ENCODE measurements at regions of chr11 and their contacts with region 1.

Region 1: GRCh38 chr11:1832211-1832919 is 2.4 kb upstream of the SYT8 start:
- DNase-seq: peak; percentile 71
- ATAC-seq: peak; percentile 83
- H3K4me3 Mint-ChIP-seq: no peak overlapping the region
- H3K27ac Mint-ChIP-seq: no peak overlapping the region
- H3K4me1 Mint-ChIP-seq: peaks cover 2% of the 10 kb centered on the region
- H3K27me3 Mint-ChIP-seq: peaks cover 9% of the 10 kb centered on the region

Region 2: GRCh38 chr11:1652771-1653540 is 179.4 kb before region 1 on chr11:
- CTCF ChIA-PET with region 1: interaction called, 71 read pairs
- DNase-seq: peak; percentile 76
- ATAC-seq: peak; percentile 87
- H3K4me3 Mint-ChIP-seq: no peak overlapping the region
- H3K27ac Mint-ChIP-seq: no peak overlapping the region
- H3K4me1 Mint-ChIP-seq: no peaks in the 10 kb centered on the region
- H3K27me3 Mint-ChIP-seq: peaks cover 22% of the 10 kb centered on the region

Region 3: DNA sequence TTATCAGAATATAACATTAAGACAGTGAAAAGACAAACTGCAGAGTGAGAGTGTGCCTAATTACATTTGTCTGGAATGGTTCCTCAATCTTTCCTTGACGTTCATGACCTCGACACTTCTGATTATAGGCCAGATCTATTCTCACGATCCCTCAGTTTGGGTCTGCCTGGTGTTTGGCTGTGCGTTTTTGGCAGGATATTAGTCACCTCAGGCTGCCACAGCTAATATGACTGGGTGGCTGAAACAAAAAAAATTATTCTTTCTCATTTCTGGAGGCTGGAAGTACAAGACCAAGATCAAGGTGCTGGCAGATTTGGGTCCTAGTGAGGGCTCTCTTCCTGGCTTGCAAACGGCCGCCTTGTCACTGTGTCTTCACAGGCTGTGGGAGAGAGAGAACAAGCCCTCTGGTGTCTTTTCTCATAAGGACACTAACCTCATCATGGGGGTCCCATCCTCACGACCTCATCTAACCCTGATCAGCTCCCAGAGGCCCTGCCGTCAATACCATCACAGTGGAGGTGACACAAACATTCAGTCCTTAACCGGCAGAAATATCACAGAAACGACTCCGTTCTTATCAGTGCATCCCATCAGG is 105.2 kb before region 1 on chr11:
- CTCF ChIA-PET with region 1: interaction called, 15 read pairs
- DNase-seq: peak; percentile 54
- ATAC-seq: peak; percentile 53
- H3K4me3 Mint-ChIP-seq: no peak overlapping the region
- H3K27ac Mint-ChIP-seq: peak overlapping the region; percentile 37
- H3K4me1 Mint-ChIP-seq: peaks cover 52% of the 10 kb centered on the region
- H3K27me3 Mint-ChIP-seq: peaks cover 31% of the 10 kb centered on the region

Region 4: GRCh38 chr11:1772270-1773130 is 59.9 kb before region 1 on chr11:
- CTCF ChIA-PET with region 1: interaction called, 10 read pairs
- DNase-seq: peak; percentile 84
- ATAC-seq: peak; percentile 98
- H3K4me3 Mint-ChIP-seq: peak overlapping the region; percentile 45
- H3K27ac Mint-ChIP-seq: peak overlapping the region; percentile 83
- H3K4me1 Mint-ChIP-seq: peaks cover 53% of the 10 kb centered on the region
- H3K27me3 Mint-ChIP-seq: peaks cover 3% of the 10 kb centered on the region

Region 5: DNA sequence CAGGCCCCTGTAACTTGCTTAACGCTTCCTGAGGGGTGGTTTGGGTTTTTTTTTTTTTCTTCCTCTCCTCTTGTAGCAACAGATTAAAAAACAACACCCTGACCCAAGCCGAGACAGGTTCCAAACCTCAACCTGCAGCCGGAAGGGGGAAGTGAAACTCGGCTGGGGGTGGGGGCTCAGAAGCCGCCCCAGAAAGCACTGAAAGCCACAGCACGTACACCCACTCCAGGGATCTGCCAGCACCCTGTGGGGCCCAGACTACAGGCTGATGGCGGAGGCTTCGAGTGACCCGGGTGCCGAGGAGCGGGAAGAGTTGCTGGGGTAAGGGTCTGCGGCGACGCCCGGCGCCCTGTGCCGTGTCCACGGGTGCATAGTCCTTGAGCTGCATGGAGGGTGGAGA is 20.5 kb after region 1 on chr11 and contains the start of gene LSP1:
- CTCF ChIA-PET with region 1: interaction called, 23 read pairs
- DNase-seq: peak; percentile 95
- ATAC-seq: peak; percentile 59
- H3K4me3 Mint-ChIP-seq: peak within 1 kb of the TSS; percentile 99
- H3K27ac Mint-ChIP-seq: peak within 1 kb of the TSS; percentile 99
- H3K4me1 Mint-ChIP-seq: peaks cover 55% of the 10 kb centered on the region
- H3K27me3 Mint-ChIP-seq: no peaks in the 10 kb centered on the region
- total RNA-seq, gene LSP1: 574 to 702 TPM

Region 6: DNA sequence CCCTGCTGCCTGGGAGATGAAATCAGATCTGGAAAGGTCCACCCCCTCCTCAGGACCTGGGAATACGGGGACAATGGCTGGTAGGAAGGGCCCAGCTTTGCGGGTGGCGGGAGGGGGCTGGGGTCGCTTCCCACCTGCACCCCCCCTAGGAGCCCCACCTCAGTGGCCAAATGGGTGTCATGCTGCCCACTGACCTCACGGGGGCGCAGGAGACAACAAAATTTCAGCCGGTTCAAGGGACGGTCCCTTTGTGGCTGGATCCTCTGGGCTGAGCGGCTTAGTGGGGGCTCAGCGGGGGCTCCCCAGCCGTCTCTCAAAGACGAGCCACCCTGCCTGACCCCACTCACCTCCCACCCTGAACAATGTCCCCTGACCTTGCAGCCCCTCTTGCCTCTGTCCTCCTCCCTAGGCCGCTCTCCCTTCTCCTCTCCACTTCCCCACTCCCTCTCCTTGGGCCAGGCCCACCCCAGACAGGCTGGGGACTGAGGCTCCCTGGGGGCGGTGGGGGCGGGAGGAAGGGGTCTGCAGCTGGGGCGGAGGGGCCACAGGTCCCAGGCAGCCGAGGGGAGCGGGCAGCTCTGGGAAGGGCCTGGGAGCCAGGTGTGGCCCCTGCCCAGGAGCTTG is 204.6 kb after region 1 on chr11:
- CTCF ChIA-PET with region 1: interaction called, 11 read pairs
- DNase-seq: no peak
- ATAC-seq: no peak
- H3K4me3 Mint-ChIP-seq: no peak overlapping the region
- H3K27ac Mint-ChIP-seq: no peak overlapping the region
- H3K4me1 Mint-ChIP-seq: no peaks in the 10 kb centered on the region
- H3K27me3 Mint-ChIP-seq: no peaks in the 10 kb centered on the region

Region 7: GRCh38 chr11:2109541-2110019 is 277.2 kb after region 1 on chr11:
- CTCF ChIA-PET with region 1: no interaction called
- DNase-seq: no peak
- ATAC-seq: no peak
- H3K4me3 Mint-ChIP-seq: no peak overlapping the region
- H3K27ac Mint-ChIP-seq: no peak overlapping the region
- H3K4me1 Mint-ChIP-seq: no peaks in the 10 kb centered on the region
- H3K27me3 Mint-ChIP-seq: peaks cover 11% of the 10 kb centered on the region